Caco-2 (cell line): ENCODE measurements at regions of chr6 and their contacts with region 1.

Region 1: DNA sequence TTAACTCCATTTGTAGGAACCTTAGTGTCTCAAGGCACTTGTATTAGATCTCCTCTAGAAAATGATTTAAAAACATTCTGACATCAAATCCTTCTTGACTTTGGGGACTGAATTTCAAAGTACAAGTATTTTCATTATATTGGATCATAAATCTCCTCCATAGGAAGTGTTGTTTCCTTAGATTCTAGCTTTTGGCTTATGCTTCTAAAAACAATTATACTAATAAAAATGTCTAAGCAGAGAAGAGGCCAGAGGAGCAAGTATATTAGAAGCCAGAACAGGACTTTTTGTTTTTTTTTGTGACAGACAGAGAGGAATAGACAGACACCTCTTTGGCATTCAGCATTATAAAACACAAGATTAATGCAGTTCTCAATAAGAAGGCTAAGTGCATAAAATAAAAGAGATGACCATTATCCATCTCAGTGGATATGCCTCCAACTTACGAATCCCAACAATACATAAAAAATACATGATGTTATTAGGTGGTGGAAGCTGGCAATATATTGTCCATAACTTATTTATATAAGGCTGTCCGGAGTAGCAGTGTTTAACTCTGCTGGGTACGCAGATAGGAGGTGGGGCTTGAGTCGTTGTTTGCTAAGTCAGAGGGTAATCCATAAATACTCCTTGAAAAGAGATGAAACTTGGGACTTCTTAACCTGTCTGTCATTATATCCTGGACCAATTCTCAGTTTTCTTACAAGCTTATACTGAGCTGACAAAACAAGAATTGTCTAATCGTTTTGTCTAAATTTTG is 31.9 kb upstream of the NOX3 start:
- DNase-seq: no peak
- H3K4me3 ChIP-seq: no peak overlapping the region
- H3K4me3 Mint-ChIP-seq: no peak overlapping the region
- H3K27ac Mint-ChIP-seq: no peak overlapping the region
- H3K4me1 ChIP-seq: peaks cover 33% of the 10 kb centered on the region
- H3K4me1 Mint-ChIP-seq: peaks cover 12% of the 10 kb centered on the region
- H3K27me3 ChIP-seq: no peaks in the 10 kb centered on the region
- H3K27me3 Mint-ChIP-seq: no peaks in the 10 kb centered on the region
- CTCF ChIP-seq: no peak

Region 2: GRCh38 chr6:155399062-155399744 is 88.3 kb before region 1 on chr6:
- CTCF ChIA-PET with region 1: no interaction called
- POLR2A ChIA-PET with region 1: no interaction called
- intact Hi-C with region 1: loop called (anchors 1 kb)
- DNase-seq: peak; percentile 70 to 85
- H3K4me3 ChIP-seq: no peak overlapping the region
- H3K4me3 Mint-ChIP-seq: no peak overlapping the region
- H3K27ac Mint-ChIP-seq: peak overlapping the region; percentile 80
- H3K4me1 ChIP-seq: peaks cover 26% of the 10 kb centered on the region
- H3K4me1 Mint-ChIP-seq: peaks cover 26% of the 10 kb centered on the region
- H3K27me3 ChIP-seq: no peaks in the 10 kb centered on the region
- H3K27me3 Mint-ChIP-seq: no peaks in the 10 kb centered on the region
- CTCF ChIP-seq: no peak

Region 3: DNA sequence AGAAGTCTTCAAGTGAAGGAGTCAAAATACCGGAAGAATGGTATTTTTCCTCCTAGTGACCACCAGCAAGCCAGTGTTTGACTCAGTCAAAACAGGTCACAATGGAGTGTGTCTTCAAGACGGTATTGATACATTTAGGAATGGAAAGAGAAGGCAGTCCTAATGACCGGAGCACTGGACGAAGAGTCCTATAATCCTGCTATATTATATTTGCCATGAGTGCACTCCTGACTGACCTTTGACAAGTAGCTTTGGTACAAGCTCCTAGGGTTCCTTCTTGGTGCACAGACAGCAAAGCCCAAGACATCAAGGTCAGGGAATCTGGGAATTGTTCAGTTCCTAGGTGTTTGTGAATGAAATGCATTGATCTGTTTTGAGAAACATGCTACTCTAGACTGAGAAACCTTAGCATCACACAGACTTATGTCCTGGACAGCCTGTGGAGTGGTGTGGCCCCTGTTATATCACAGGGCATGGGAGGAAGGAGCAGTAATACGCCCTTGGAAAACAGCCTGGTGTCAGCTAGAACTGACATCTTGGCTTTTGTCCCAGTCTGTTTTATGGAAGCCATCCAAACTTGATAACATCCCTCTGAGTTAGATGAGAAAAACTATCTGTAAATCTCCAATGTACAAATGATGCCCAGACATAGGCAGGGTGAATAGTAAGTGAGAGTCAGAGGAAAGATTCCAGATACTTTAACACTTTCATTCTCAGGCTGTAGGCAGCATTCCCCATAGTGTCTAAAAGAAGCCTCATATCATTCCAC is 50.4 kb before region 1 on chr6:
- CTCF ChIA-PET with region 1: no interaction called
- POLR2A ChIA-PET with region 1: no interaction called
- intact Hi-C with region 1: loop called (anchors 2 kb)
- DNase-seq: no peak
- H3K4me3 ChIP-seq: no peak overlapping the region
- H3K4me3 Mint-ChIP-seq: no peak overlapping the region
- H3K27ac Mint-ChIP-seq: no peak overlapping the region
- H3K4me1 ChIP-seq: no peaks in the 10 kb centered on the region
- H3K4me1 Mint-ChIP-seq: no peaks in the 10 kb centered on the region
- H3K27me3 ChIP-seq: no peaks in the 10 kb centered on the region
- H3K27me3 Mint-ChIP-seq: no peaks in the 10 kb centered on the region
- CTCF ChIP-seq: no peak

Region 4: GRCh38 chr6:155461556-155461955 is 26.0 kb before region 1 on chr6:
- CTCF ChIA-PET with region 1: no interaction called
- POLR2A ChIA-PET with region 1: no interaction called
- intact Hi-C with region 1: no loop called
- DNase-seq: no peak
- H3K4me3 ChIP-seq: no peak overlapping the region
- H3K4me3 Mint-ChIP-seq: no peak overlapping the region
- H3K27ac Mint-ChIP-seq: no peak overlapping the region
- H3K4me1 ChIP-seq: no peaks in the 10 kb centered on the region
- H3K4me1 Mint-ChIP-seq: no peaks in the 10 kb centered on the region
- H3K27me3 ChIP-seq: no peaks in the 10 kb centered on the region
- H3K27me3 Mint-ChIP-seq: no peaks in the 10 kb centered on the region
- CTCF ChIP-seq: no peak

Region 5: DNA sequence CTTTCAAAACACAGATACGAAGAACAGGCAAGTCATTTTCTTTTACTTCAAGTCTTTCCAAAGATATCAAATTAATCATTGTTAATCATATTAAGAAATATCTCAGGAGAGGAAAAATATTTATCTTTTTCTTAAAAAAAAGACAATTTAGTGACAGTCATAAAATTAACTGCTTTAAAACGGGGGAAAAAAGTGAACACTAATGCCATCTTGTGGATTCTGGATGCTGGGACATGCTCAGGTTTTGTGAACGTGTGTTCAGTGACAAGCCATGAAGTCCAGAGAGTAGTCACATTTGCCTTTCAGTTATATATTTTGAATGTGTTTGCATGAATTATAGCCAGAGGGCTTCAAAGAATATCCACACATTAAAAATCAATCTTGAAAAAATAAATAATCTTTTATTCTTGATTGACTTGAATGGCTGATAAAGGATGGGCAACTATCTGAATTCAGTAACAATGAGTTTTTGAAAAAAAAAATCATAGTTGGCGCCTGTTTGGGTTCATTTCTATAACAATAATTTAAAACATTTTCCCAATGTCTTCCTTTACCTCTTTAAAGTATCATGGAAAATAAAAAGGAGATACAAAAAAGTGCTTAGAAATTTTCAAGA is 42.8 kb after region 1 on chr6:
- CTCF ChIA-PET with region 1: no interaction called
- POLR2A ChIA-PET with region 1: no interaction called
- intact Hi-C with region 1: loop called (anchors 2 kb)
- DNase-seq: peak in 1 of 2 experiments; percentile 36
- H3K4me3 ChIP-seq: no peak overlapping the region
- H3K4me3 Mint-ChIP-seq: no peak overlapping the region
- H3K27ac Mint-ChIP-seq: no peak overlapping the region
- H3K4me1 ChIP-seq: peaks cover 9% of the 10 kb centered on the region
- H3K4me1 Mint-ChIP-seq: no peaks in the 10 kb centered on the region
- H3K27me3 ChIP-seq: no peaks in the 10 kb centered on the region
- H3K27me3 Mint-ChIP-seq: no peaks in the 10 kb centered on the region
- CTCF ChIP-seq: peak; percentile 58 to 76